ENCODE measurements at regions of chr2 and their contacts with region 1.

Region 1: DNA sequence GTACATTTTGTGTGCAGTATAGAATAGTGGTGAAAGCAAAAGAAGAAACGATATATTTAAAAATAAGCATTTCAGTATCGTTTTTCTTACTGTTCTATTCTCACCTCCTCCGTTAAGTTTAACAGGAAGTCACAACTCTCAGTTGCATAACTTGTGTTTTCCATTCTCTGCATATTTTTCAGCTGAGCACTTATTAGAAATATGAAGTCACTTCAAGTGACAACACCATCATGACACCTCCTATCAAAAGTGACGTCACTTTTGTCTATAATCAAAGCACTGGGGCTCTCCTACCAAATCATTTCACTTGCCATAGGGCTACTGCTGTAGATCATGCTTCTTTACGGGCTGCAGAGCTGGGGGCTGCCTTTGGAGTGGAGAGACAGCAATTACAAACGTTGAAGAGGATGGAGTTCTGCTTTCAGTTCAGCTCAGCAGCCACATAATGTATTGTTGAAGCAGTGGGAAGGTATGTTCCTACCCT is 36.3 kb downstream of the STAT4 start:
- DNase-seq: peak; percentile 40
- H3K4me3 Mint-ChIP-seq: peak overlapping the region; percentile 64
- H3K27ac Mint-ChIP-seq: peak overlapping the region; percentile 94
- H3K4me1 Mint-ChIP-seq: peaks cover 76% of the 10 kb centered on the region
- H3K27me3 Mint-ChIP-seq: no peaks in the 10 kb centered on the region

Region 2: DNA sequence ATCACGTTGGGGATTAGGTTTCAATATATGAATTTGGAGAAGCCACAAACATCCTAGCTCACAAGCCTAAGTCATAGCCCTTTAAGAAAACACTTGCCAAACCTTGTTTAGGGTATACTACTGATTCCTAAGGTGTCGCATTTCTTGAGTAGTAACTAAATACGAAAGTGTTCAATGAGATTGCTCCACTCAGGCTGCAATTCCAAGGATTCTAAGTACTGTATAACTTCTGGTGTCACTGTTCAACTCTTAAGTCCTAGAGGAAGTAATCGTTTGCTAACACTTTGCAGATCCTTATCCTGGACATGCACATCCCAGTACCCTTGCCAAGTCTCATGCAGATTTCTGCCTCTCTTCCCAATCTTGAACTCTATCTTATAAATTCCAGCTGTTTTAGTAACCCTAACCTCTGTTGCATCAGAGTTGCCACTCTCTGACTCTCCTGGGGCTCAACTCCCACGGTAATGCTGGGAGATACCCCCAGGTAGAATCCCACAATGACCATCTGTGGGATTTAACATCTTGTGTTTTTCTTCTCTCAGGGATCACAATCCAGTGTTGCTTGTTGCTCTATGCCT is 917.2 kb before region 1 on chr2:
- intact Hi-C with region 1: no loop called
- DNase-seq: no peak
- H3K4me3 Mint-ChIP-seq: no peak overlapping the region
- H3K27ac Mint-ChIP-seq: no peak overlapping the region
- H3K4me1 Mint-ChIP-seq: no peaks in the 10 kb centered on the region
- H3K27me3 Mint-ChIP-seq: no peaks in the 10 kb centered on the region

Region 3: DNA sequence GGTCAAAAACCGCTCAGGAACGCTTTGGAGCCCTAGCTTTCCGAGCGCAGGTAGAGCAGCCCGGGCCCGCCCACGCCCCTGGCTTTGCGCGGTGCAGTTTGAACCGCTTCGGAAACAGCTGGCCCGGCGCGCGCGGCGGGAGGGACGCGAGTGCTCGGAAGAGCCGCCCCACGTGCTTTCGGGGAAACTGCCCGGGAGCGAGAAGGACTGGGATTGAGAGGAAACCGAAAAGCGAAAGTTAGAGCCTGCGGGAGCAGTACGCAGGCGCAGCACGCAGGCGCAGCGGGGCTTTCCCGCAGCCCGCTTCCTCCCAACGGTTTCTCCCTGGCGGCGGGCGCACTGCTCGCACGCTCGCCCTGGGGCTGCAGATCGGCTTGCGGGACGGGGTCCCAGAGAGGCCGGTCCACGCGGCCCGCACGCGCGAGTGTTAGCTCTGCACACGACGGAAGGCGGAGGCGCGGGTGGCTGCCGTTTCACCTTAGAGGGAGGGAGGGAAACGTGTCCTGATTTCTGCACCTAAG is 94.2 kb before region 1 on chr2:
- intact Hi-C with region 1: loop called (anchors 2 kb)
- DNase-seq: peak; percentile 96
- H3K4me3 Mint-ChIP-seq: no peak overlapping the region
- H3K27ac Mint-ChIP-seq: no peak overlapping the region
- H3K4me1 Mint-ChIP-seq: peaks cover 35% of the 10 kb centered on the region
- H3K27me3 Mint-ChIP-seq: no peaks in the 10 kb centered on the region

Region 4: GRCh38 chr2:191066197-191066918 is 48.1 kb before region 1 on chr2:
- intact Hi-C with region 1: loop called (anchors 1 kb)
- DNase-seq: no peak
- H3K4me3 Mint-ChIP-seq: peak overlapping the region; percentile 76
- H3K27ac Mint-ChIP-seq: peak overlapping the region; percentile 80
- H3K4me1 Mint-ChIP-seq: peaks cover 74% of the 10 kb centered on the region
- H3K27me3 Mint-ChIP-seq: no peaks in the 10 kb centered on the region

Region 5: DNA sequence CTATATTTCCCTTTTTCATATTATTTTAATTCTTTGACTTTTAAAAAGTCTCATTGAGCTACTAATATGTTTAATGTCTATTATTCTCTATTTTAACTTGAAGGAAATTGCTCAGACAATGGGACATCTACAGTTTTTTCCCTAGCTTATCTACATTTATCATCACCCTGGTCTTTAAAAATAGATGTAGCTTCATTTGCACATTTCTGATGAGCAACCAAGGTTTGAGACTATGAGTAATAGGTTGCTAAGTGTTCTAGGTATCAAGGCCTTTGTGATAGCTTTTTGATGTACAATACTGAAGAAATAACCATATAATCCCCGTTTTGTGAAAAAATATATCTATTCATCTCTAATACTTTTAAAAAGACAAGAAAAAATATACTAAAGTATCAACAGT is 10.7 kb before region 1 on chr2:
- intact Hi-C with region 1: loop called (anchors 1 kb)
- DNase-seq: no peak
- H3K4me3 Mint-ChIP-seq: no peak overlapping the region
- H3K27ac Mint-ChIP-seq: no peak overlapping the region
- H3K4me1 Mint-ChIP-seq: peaks cover 53% of the 10 kb centered on the region
- H3K27me3 Mint-ChIP-seq: no peaks in the 10 kb centered on the region

Measured in activated T-helper 2 cell treated with anti-CD3 and anti-CD28 coated beads, Interferon-gamma antibody, Interleukin-2, Interleukin-4, amounts not matched to agents 10 μg/mL and 5 μg/mL and 100 μg/mL, durations not matched to agents 14 hours and 24 hours and 36 hours (primary cell).